GM10248 (cell line): ENCODE measurements at regions of chr3 and their contacts with region 1.

Region 1: DNA sequence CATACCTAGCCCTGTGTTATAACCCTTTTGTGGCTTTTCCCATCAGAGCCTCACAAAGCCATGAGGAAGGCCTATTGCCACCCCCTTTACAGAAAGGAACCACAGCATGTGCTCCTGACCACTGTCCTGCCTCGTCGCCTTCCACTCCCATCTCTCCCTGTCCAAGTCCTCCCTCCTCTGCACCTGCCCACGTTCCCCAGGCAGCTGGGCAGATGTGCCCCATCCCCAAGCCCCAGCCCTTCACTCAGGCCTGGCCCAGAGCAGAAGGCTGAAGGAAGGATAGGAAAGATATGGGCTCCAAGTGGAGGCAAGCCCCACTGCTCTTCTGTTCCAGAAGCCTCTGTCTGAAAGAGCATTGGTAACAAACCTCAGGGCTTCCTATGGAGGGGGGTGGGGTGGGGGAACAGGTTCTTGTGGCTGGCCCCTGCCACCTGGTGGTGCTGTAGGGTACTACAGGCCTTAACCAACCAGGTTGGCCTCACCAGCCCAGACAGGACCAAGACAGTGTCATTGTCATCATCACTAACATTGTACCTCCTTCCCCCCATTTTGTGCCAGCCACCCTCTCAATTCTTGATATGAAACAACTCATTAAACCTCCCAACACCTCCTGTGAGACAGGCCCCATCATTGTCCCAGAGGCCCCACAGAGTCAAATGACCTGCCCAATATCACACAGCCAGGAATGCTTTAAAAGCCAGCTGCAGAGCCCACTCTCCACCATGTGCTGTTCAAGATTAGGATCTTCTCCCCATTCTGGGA is 10.0 kb downstream of the POC1A start:
- DNase-seq: peak; percentile 88
- CTCF ChIP-seq: peak; percentile 95

Region 2: DNA sequence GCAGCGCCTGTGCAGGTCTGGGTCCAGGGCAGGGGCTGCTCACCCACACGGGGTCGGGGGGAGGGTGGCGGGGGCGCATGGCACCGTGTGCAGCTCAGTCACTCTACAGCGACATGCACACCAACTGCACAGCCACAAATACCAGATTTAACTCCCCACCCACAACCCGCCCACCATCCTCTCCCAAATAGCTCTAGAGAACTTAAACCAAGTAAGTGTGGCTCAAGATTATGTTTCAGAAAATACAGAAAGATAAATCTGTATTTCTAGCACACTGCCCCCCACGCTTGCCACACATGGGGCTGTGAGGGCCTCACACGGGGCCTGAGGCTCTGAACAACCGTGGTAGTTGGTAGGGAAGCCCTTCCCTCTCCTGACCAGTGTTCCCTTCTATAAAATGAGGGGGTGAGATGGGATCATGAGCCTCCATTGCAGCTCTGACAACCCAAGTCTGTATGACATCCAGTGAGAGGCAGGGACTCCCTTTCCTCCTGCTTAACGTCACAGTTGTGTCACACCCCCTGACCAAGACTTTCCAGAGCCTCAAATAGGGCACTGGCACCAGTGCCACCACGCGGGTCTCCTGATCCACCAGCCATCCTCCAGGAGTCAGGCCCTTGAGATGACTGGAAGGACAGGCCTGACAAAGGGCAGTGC is 13.1 kb before region 1 on chr3:
- CTCF ChIA-PET with region 1: interaction called, 24 read pairs
- POLR2A ChIA-PET with region 1: interaction called, 3 read pairs
- DNase-seq: peak; percentile 56
- CTCF ChIP-seq: no peak

Region 3: DNA sequence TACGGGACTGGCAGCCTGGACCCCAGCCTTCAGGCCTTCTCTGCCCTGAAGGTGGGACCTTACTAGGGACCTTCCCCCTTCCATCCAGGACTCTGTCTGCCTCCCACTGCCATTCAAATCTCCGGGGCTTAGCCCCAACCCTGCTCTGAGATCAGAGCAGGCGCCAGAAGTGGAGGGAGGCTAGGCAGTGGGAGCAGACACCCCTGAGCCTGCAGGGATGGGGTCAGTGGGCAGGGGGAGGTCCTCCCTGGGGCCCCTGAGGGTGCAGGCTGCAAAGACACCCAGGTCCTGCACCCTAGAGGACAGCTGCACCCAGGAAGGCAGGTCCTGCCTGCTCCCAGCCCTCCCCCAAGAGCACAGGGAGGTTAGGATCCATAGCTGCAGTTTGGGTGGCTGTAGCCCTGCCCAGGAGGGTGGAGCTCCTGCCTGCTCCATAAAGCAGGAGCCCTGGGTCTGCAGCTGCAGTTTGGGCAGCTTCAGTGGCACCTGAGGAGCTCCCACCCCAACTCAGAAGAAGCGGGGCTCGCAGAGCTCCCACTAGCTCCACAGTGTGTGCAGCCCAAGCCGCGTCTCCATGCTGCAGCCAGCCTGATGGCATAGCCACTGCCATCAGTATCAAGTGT is 18.1 kb after region 1 on chr3:
- CTCF ChIA-PET with region 1: interaction called, 11 read pairs
- POLR2A ChIA-PET with region 1: no interaction called
- DNase-seq: no peak
- CTCF ChIP-seq: no peak

Region 4: DNA sequence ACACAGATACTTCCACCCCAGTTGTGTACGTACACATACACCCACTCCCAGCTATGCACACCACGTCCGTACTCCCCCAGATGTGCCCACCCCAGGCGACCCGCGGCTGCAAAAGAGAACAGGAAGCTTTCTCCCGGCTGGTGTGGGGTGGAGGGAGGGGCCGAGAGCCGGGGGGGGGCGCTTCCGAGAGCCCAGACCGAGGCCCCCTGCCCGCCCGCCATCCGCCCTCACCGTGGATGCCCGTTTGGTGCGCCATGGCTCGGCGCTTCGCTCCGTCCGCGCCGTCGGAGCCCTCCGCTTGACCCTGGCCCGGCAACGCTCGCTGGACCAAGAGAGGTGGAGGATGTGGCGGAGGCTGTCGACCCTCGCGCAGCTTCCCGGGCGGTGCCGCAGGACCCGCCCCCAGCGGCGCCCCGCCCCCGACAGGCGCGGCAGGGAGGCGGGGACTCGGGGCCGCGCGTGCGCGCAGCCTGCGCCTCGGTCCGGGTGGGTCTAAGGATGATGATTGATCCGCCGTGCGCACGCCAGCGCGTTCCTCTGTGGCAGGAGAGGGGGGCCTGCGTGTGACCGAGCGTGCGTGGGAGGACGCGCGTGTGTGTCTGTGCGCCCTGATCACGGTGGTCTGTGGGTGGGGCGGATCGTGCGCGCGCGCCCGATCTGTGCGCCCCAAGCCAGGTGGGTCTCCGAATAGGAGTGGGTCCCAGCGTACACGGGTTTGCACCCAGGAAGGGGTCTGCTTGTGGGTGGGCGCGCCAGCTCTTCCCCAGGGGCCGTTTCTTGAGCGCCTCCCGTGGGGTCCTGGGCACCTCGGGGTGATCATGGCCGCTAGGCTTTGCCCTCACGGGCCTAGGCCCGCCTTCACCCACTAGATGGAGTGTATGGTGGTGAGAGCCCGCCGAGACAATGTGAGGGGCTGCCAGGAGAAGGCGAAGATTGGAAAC is 94.8 kb after region 1 on chr3 and contains the start of gene TWF2:
- CTCF ChIA-PET with region 1: no interaction called
- POLR2A ChIA-PET with region 1: no interaction called
- DNase-seq: peak; percentile 97
- CTCF ChIP-seq: peak; percentile 44

Region 5: GRCh38 chr3:52299879-52300611 is 155.8 kb after region 1 on chr3:
- CTCF ChIA-PET with region 1: no interaction called
- POLR2A ChIA-PET with region 1: no interaction called
- DNase-seq: peak; percentile 63
- CTCF ChIP-seq: no peak